Heart left ventricle (tissue), 16 donors: ENCODE measurements at regions of chr7 and their contacts with region 1.

Region 1: DNA sequence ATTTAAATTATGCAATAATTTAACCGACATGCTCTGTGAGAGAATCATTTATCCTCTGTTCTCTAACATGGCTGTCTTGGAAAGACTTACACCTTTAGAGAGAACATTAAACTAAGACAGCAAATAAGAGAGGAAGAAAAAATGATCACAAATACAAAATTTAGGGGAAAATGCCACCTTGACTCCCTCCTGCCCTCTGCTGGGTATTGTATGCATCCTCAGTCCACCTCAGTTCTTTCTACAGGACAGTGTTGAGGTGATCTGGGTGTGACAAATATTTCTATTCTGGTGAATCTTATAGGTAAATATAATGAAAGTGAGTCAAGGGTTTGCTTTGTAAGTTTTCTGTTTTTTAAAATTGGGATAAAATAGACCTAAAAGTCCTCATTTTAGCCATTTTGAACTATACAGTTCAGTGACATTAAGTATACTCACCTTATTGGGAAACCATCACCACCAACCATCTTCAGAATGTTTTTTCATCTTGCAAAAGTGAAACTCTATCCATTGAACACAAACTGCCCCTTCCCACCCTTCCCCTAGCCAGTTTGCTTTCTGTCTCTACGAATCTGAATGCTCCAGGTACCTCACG is 61.5 kb upstream of the ELMO1 start:
- DNase-seq: no peak
- ATAC-seq: no peak
- H3K4me3 ChIP-seq: no peak overlapping the region
- H3K27ac ChIP-seq: no peak overlapping the region
- H3K4me1 ChIP-seq: peaks cover 0 to 10% (median 0%) of the 10 kb centered on the region in 12 donors
- H3K27me3 ChIP-seq: peaks cover 0 to 4% (median 0%) of the 10 kb centered on the region in 9 donors
- CTCF ChIP-seq: peak; percentile 48 to 70 (median 64)
- POLR2A ChIP-seq: no peak

Region 2: GRCh38 chr7:36346260-36346831 is 1163.8 kb before region 1 on chr7:
- intact Hi-C with region 1: no loop called
- DNase-seq: no peak
- ATAC-seq: no peak
- H3K4me3 ChIP-seq: no peak overlapping the region
- H3K27ac ChIP-seq: no peak overlapping the region
- H3K4me1 ChIP-seq: no peaks in the 10 kb centered on the region
- H3K27me3 ChIP-seq: no peaks in the 10 kb centered on the region
- CTCF ChIP-seq: no peak
- POLR2A ChIP-seq: no peak

Region 3: DNA sequence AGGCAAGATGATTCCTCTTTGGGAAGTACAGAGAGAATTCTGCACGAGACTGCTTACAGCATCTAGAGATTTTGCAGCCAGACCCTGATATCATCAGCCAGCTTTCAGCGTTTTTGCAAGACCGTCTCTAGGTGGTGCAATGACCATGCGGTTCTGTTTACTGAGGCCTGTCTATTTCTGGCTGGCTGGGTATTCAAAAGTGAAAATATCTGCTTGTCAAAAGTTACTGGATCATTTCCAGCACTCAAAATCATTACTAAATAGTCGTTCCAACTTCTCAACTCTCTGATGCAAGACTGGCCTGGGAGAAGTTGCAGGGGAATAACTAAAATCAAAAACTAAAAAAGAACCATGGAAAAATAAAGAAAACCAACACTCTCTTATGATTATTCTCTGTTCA is 301.6 kb before region 1 on chr7:
- intact Hi-C with region 1: loop called in 2 of 10 experiments (anchors 5 to 10 kb)
- DNase-seq: peak in 4 of 5 donors; percentile 73 to 76 (median 74)
- ATAC-seq: peak; percentile 85 to 93 (median 90)
- H3K4me3 ChIP-seq: no peak overlapping the region
- H3K27ac ChIP-seq: peak overlapping the region; percentile 6 to 75 (median 56)
- H3K4me1 ChIP-seq: peaks cover 0 to 33% (median 22%) of the 10 kb centered on the region in 12 donors
- H3K27me3 ChIP-seq: no peaks in the 10 kb centered on the region
- CTCF ChIP-seq: peak; percentile 51 to 82 (median 59)
- POLR2A ChIP-seq: no peak

Region 4: GRCh38 chr7:37234928-37235327 is 275.2 kb before region 1 on chr7:
- intact Hi-C with region 1: loop called in 1 of 10 experiments (anchors 5 kb)
- DNase-seq: no peak
- ATAC-seq: no peak
- H3K4me3 ChIP-seq: no peak overlapping the region
- H3K27ac ChIP-seq: no peak overlapping the region
- H3K4me1 ChIP-seq: peaks cover 0 to 10% (median 1%) of the 10 kb centered on the region in 12 donors
- H3K27me3 ChIP-seq: no peaks in the 10 kb centered on the region
- CTCF ChIP-seq: peak; percentile 27 to 65 (median 52)
- POLR2A ChIP-seq: no peak